ENCODE measurements at regions of chr6 and their contacts with region 1.

Region 1: GRCh38 chr6:2245094-2245876 is at the start of gene GMDS:
- DNase-seq: peak; percentile 79
- H3K4me3 Mint-ChIP-seq: peak within 1 kb of the TSS; percentile 88
- H3K27ac Mint-ChIP-seq: peak within 1 kb of the TSS; percentile 94
- H3K4me1 Mint-ChIP-seq: peaks cover 62% of the 10 kb centered on the region
- H3K27me3 Mint-ChIP-seq: no peaks in the 10 kb centered on the region
- total RNA-seq, gene GMDS: 38.4 to 41.3 TPM

Region 2: GRCh38 chr6:1770968-1771723 is 474.1 kb before region 1 on chr6:
- CTCF ChIA-PET with region 1: no interaction called
- intact Hi-C with region 1: loop called (anchors 5 kb)
- DNase-seq: peak; percentile 78
- H3K4me3 Mint-ChIP-seq: no peak overlapping the region
- H3K27ac Mint-ChIP-seq: no peak overlapping the region
- H3K4me1 Mint-ChIP-seq: peaks cover 47% of the 10 kb centered on the region
- H3K27me3 Mint-ChIP-seq: no peaks in the 10 kb centered on the region

Region 3: DNA sequence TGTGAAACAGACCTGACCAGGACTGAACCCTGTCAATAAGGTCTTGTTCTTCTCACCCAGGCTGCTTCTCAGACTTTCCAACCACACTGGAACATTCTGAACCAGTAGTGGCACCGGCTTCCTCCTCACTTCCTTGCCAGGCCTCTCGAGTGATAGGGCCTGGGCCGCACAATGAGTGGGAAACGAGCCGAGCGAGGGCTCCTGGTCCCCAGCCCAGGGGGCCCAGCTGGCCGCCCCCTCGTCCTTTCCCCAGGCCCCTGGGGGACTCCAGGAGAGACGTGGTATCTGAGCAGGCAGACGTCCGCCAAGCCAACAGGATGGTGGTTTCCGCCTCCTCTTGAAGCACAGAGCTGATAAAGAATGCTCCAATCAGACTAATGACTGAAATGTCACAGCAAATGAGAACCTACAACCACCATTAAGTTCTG is 117.8 kb before region 1 on chr6:
- CTCF ChIA-PET with region 1: no interaction called
- intact Hi-C with region 1: loop called (anchors 5 kb)
- DNase-seq: peak; percentile 67
- H3K4me3 Mint-ChIP-seq: no peak overlapping the region
- H3K27ac Mint-ChIP-seq: peak overlapping the region; percentile 12
- H3K4me1 Mint-ChIP-seq: peaks cover 31% of the 10 kb centered on the region
- H3K27me3 Mint-ChIP-seq: no peaks in the 10 kb centered on the region